ENCODE measurements at regions of chr2 and their contacts with region 1.

Region 1: DNA sequence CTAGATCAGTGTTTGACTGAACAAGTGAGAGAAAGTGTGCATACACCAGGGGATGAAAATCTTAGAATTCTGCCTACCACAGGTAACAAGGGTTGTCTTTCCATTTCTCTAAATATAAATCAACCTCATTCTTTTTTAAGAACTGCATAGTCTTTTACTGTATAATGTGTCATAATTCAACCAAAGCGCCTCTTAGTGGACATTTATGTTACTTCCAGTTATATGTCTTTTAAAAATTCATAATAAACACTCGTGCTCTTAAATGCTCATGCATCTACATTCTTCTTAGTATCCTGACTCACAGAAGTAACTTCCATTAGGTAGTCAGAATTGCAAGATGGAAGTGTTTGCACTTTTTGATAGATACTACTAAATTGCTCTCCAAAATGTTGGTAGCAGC is 76.2 kb downstream of the CHRNA1 start:
- DNase-seq: no peak
- H3K4me3 Mint-ChIP-seq: no peak overlapping the region
- H3K27ac Mint-ChIP-seq: no peak overlapping the region
- H3K4me1 Mint-ChIP-seq: peaks cover 18% of the 10 kb centered on the region
- H3K27me3 Mint-ChIP-seq: peaks cover 10% of the 10 kb centered on the region

Region 2: GRCh38 chr2:174577967-174578589 is 110.0 kb before region 1 on chr2:
- intact Hi-C with region 1: loop called (anchors 1 kb)
- DNase-seq: no peak
- H3K4me3 Mint-ChIP-seq: no peak overlapping the region
- H3K27ac Mint-ChIP-seq: no peak overlapping the region
- H3K4me1 Mint-ChIP-seq: peaks cover 54% of the 10 kb centered on the region
- H3K27me3 Mint-ChIP-seq: no peaks in the 10 kb centered on the region